BJ (cell line): ENCODE measurements at regions of chr20 and their contacts with region 1.

Region 1: GRCh38 chr20:5448449-5449118 is 131.8 kb upstream of the PROKR2 start:
- DNase-seq: no peak
- H3K4me3 ChIP-seq: no peak overlapping the region
- H3K27me3 ChIP-seq: no peaks in the 10 kb centered on the region
- CTCF ChIP-seq: peak; percentile 81

Region 2: DNA sequence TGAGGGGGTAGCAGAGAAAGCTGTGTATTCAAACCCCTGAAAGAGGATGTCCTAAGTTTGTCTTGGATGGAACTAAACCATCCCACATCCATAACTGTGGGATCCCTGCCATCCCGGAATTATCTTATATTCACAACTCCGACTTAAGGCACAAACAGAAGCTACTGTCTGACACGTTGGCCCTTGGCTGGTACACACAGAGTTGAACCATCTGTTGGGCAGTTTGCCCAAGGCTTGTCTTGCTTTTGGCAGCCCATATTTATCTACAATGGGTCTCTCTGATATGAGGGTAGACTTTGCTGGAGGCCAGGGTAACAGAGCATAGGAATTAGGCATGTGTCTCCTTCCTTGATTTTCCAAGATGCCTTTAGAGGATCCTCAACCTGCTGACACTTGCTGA is 15.2 kb before region 1 on chr20:
- CTCF ChIA-PET with region 1: interaction called, 10 read pairs
- POLR2A ChIA-PET with region 1: no interaction called
- DNase-seq: no peak
- H3K4me3 ChIP-seq: no peak overlapping the region
- H3K27me3 ChIP-seq: no peaks in the 10 kb centered on the region
- CTCF ChIP-seq: no peak

Region 3: DNA sequence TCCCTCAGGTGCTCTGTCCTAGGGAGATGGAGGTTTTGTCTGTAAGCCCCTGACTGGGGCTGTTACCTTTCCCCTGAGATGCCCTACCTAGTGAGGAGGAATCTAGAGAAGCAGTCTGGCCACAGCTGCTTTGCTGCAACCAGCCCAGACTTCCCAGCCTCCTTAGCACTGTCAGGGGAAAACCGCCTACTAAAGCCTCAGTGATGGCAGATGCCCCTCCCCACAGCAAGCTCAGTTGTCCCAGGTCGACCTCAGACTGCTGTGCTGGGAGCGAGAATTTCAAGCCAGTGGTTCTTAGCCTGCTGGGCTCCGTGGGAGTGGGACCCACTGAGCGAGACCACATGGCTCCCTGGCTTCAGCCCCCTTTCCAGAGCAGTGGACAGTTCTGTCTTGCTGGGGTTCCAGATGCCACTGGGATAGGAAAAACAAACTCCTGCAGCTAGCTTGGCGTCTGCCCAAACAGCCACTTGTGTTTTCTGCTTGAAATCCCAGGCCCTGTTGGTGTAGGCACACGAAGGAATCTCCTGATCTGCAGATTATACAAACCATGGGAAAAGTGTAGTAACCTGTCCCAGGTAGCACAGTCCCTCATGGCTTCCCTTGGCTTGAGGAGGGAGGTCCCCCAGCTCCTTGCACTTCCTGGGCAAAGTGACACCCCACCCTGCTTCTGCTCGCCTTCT is 14.6 kb after region 1 on chr20:
- CTCF ChIA-PET with region 1: interaction called, 14 read pairs
- POLR2A ChIA-PET with region 1: no interaction called
- DNase-seq: no peak
- H3K4me3 ChIP-seq: no peak overlapping the region
- H3K27me3 ChIP-seq: no peaks in the 10 kb centered on the region
- CTCF ChIP-seq: no peak